ENCODE measurements at regions of chr3 and their contacts with region 1.

Region 1: DNA sequence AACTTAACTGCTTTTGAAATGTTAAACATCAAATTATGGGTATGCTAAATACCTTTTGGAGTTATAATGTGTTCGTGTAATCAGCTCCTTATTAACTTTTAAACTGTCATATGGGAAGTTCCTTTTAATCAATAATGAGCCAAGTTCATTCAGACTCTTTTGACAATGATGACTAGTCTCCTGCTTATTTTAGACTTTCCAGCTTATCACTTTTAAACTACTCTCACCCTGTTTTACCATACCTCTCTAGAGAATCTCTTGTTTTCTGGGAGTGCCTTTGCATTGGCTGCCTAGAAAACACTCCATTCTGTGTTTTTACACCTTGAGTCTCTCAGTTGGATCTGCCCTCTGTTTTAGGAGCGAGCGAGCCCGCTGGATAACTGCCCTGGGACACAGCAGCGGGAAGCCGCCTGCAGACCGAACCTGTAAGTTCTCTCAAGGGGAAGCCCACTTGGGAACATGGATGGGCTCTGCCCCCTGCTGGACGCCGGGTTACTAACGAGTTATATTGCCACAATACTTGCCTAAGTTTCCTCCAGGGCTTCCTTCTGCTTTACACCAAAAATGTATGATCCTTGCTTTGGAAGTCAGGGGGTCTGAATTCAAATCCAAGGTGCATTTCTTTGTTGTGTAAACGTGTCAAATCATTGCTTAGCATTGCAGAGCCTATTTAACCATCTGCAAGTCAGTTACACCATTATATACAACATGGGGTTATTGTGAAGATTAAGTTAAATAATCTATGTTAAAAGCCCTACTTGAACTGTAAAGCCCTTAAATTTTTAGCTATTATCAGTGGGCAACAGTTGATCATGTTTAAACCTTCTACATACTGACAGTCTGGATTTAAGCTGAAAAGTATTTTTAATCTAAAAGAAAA is 71.3 kb downstream of the DHX36 start:
- DNase-seq: peak; percentile 85

Region 2: DNA sequence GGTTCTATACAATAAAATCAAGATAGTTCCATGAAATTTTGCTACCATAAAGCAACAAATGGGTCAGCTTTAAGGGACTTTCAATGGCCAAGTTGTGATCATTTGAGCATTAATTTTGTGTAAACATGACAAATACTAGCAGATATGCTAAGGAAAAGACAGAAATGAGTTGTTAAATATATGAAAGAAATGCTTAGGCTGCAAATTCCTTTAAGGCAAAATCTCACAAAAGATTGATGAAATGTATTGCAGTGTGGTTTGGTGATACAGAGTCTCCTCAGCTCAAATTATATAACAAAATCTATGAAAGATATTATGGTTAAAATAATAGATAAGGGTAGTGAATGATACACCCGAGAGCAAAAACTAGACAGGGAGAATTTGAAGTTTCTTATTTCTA is 713.7 kb before region 1 on chr3:
- in situ Hi-C with region 1: no loop called
- DNase-seq: no peak

Region 3: GRCh38 chr3:154095832-154096421 is 157.1 kb before region 1 on chr3:
- in situ Hi-C with region 1: loop called (anchors 25 kb)
- DNase-seq: no peak